PC-3 (cell line): ENCODE measurements at regions of chr3 and their contacts with region 1.

Region 1: DNA sequence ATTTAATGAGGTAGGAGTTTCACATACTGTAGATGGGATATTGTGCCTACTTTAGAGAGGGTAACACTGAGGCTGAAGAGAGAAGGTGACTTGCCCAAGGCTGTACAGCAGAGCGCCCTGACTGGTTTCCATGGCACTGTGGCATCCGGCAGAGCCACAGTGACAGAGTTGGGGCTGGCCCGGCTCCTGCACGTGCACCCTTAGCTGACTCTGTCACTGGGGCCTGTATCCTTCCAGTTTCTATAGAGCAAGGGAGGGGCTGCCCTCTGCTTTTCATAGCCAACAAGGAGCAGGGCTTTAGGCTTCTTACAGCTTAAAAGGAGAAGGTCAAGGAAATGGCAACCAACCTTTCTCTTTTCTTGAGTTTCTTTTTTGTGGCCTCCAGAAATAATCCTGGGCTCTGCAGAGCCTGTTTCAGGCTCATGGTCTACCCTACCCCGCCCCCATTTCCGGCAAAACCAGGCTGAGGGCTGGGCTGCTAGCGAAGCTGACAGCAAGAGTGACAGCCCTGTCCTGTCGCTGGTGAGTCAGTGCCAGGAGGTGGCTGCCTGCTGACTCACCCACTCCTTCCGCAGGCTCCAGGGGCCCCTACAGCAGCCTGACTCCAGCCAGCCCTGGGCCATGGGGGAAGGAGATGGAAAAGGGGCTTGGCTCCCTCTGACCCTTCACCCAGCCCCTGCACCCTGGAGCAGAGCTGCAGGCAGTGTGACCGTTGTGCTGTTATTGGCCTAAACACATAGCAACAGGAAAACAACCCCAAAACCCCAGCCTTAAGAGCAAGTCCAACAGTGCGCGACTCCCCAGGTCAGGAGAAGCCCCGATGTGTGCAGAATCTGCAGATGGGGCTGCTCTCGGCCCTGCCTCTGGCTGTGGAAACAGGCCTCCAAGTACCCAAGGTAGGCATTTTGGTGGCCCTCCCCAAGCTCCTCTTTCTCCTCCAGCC is 29.8 kb downstream of the SLC6A6 start:
- DNase-seq: peak; percentile 96
- ATAC-seq: peak; percentile 89
- H3K4me3 ChIP-seq: peak overlapping the region; percentile 18; the same call in 1 of the 2 replicates
- H3K27ac ChIP-seq: peak overlapping the region; percentile 75
- H3K4me1 ChIP-seq: peaks cover 53% of the 10 kb centered on the region
- H3K27me3 ChIP-seq: no peaks in the 10 kb centered on the region
- CTCF ChIP-seq: no peak

Region 2: GRCh38 chr3:14452679-14453367 is 20.7 kb after region 1 on chr3:
- CTCF ChIA-PET with region 1: no interaction called
- POLR2A ChIA-PET with region 1: interaction called, 3 read pairs
- intact Hi-C with region 1: loop called (anchors 1 kb)
- DNase-seq: peak; percentile 92
- ATAC-seq: peak; percentile 86
- H3K4me3 ChIP-seq: peak overlapping the region; percentile 45
- H3K27ac ChIP-seq: peak overlapping the region; percentile 92
- H3K4me1 ChIP-seq: peaks cover 25% of the 10 kb centered on the region
- H3K27me3 ChIP-seq: no peaks in the 10 kb centered on the region
- CTCF ChIP-seq: no peak

Region 3: DNA sequence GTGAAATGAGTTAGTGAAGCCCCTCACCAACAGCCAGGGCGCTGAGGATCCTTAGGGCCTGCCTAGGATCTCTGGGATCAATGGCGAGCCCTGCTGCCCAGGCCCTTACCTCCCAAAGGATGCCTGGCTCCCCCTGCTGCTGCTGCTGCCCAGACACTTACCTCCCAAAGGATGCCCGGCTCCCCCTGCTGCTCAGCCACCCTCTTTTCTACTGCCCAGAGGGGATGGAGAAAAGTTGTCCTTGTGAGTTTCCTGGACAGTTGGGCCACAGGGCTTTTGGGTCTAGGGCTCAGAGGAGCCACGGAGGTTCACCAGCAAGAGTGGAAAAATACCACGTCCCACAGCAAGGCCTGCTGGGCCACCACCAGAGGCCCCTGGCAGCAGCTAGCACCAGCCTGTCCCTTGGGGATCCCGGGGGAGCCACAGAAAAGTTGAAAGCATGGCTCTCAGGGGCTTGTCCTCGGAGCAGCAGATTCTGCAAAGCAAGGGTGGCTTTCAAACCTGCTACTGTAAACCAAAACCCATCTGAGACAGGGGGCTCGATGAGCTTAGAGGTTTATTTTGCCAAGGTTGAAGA is 29.7 kb after region 1 on chr3:
- CTCF ChIA-PET with region 1: interaction called, 13 read pairs
- POLR2A ChIA-PET with region 1: no interaction called
- intact Hi-C with region 1: no loop called
- DNase-seq: peak; percentile 74
- ATAC-seq: peak; percentile 73
- H3K4me3 ChIP-seq: no peak overlapping the region
- H3K27ac ChIP-seq: no peak overlapping the region
- H3K4me1 ChIP-seq: peaks cover 12% of the 10 kb centered on the region
- H3K27me3 ChIP-seq: no peaks in the 10 kb centered on the region
- CTCF ChIP-seq: peak; percentile 97